ENCODE measurements at regions of chr5 and their contacts with region 1.

Region 1: GRCh38 chr5:103340717-103341388 is 82.3 kb downstream of the MACIR start:
- DNase-seq: peak; percentile 10
- H3K4me3 Mint-ChIP-seq: no peak overlapping the region
- H3K27ac Mint-ChIP-seq: no peak overlapping the region
- H3K4me1 Mint-ChIP-seq: peaks cover 12% of the 10 kb centered on the region
- H3K27me3 Mint-ChIP-seq: peaks cover 16% of the 10 kb centered on the region

Region 2: DNA sequence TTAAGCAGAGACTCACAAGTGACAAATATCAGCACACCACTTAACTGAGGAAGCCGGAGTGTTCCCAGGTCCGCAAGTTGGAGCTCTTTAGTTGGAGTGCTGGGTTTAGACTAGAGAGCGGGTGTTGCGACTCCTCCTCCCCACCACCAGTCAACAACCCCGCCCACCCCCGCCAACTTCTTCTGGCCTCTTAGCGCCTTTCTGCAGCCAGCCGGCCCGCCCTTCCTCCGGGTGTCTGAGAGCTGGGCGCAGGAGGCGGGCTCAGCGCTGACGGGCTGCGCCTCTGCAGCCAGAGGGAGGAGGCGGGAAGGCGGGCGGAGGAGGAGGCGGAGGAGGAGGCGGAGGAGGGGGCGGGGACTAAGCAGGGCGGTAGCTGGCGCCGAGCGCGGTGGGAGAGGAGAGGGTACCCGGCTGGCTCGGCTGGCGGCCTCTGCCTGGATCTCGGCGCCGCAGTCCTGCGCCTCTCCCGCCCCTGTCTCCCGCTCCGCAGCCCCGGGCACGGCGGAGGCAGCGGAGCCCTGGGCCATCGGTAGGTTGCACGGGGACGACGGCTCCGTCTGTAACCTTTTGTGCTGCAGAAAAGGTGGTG is 82.4 kb before region 1 on chr5 and contains the start of gene MACIR:
- intact Hi-C with region 1: loop called (anchors 2 kb)
- DNase-seq: peak; percentile 92
- H3K4me3 Mint-ChIP-seq: peak within 1 kb of the TSS; percentile 92
- H3K27ac Mint-ChIP-seq: peak within 1 kb of the TSS; percentile 75
- H3K4me1 Mint-ChIP-seq: peaks cover 28% of the 10 kb centered on the region
- H3K27me3 Mint-ChIP-seq: peaks cover 11% of the 10 kb centered on the region
- total RNA-seq, gene MACIR: 12.3 TPM in 2 replicates

Region 3: DNA sequence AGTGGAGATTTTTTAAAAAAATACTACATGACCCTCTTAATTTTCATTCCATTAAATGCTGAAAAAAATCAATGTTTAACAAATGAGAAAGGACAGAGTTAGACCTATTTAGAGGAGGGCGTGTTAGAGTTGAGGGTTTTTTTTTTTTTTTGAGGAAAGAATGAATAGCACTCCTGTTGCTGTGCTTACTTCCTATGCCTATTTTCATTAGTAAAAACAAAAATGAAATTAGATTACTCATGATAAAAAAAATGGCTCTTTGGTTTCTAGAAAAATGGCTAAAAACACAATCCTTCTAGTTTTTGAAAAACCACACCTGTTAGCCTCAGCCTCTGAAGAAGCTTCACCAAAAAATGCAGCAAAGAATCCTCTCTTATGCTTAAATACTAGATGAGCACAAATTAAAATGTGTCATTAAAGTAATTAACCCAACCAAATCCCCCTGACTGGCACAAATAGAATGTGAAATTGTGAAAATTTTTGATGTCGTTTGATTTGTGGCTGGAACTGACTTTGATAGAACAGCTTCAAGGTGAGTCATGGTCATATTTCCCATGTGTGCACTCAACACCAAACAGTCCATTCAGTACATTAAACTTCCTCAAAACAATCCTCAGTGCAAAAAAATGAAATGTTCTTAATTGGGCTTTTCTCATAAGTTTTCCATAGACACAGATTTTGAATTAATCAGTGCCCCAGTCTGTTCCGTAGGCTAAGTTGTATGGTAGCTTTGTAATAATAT is 15.7 kb after region 1 on chr5:
- intact Hi-C with region 1: loop called (anchors 1 kb)
- DNase-seq: no peak
- H3K4me3 Mint-ChIP-seq: no peak overlapping the region
- H3K27ac Mint-ChIP-seq: peak overlapping the region; percentile 49
- H3K4me1 Mint-ChIP-seq: peaks cover 18% of the 10 kb centered on the region
- H3K27me3 Mint-ChIP-seq: peaks cover 15% of the 10 kb centered on the region

Region 4: DNA sequence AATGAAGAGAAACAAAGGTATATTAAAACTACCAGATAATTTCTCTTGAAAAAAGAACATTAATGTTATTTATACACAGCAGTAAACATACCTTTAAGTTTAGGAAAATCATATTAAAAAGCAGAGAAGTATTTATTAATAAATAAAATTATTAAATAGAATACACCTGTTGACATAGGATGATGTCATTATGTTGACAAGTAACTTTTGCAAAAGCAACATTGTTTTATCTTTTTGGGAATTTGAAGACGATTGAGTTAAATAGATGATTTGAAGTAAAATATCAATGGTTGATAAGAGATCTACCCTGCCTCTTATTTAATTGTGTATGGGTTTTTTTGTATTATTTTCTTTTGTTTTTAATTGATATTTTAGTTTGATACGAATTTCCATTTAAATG is 932.9 kb after region 1 on chr5:
- intact Hi-C with region 1: no loop called
- DNase-seq: no peak
- H3K4me3 Mint-ChIP-seq: no peak overlapping the region
- H3K27ac Mint-ChIP-seq: no peak overlapping the region
- H3K4me1 Mint-ChIP-seq: no peaks in the 10 kb centered on the region
- H3K27me3 Mint-ChIP-seq: no peaks in the 10 kb centered on the region

Measured in activated T-helper 2 cell treated with anti-CD3 and anti-CD28 coated beads, Interferon-gamma antibody, Interleukin-2, Interleukin-4, amounts not matched to agents 10 μg/mL and 5 μg/mL and 100 μg/mL, durations not matched to agents 14 hours and 24 hours and 36 hours (primary cell).